Activated T-helper 2 cell treated with anti-CD3 and anti-CD28 coated beads, Interferon-gamma antibody, Interleukin-2, Interleukin-4, amounts not matched to agents 10 μg/mL and 5 μg/mL and 100 μg/mL, durations not matched to agents 14 hours and 24 hours and 36 hours (primary cell): ENCODE measurements at regions of chr3 and their contacts with region 1.

Region 1: GRCh38 chr3:133595341-133595740 is 21.9 kb downstream of the CDV3 start:
- DNase-seq: no peak
- H3K4me3 Mint-ChIP-seq: no peak overlapping the region
- H3K27ac Mint-ChIP-seq: peak overlapping the region; percentile 79
- H3K4me1 Mint-ChIP-seq: peaks cover 28% of the 10 kb centered on the region
- H3K27me3 Mint-ChIP-seq: no peaks in the 10 kb centered on the region

Region 2: DNA sequence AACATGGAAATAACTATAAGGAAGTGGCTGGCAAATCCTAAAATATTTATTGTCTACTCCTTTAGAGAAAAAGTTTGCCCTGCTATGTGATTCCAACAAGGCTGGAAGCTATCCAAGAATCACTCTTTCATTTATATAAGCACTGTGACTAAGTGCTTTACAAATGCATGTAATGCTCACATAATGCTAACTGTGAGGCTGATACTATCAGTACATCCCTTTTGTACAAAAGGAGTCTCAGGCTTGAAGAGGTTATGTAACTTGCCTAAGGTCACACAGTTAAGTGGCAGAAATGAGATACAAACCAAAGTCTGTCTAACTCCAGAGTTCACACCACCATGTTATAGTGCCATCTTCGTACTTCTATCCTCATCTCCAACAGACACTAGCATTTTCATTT is 49.4 kb after region 1 on chr3:
- intact Hi-C with region 1: loop called (anchors 5 kb)
- DNase-seq: no peak
- H3K4me3 Mint-ChIP-seq: no peak overlapping the region
- H3K27ac Mint-ChIP-seq: no peak overlapping the region
- H3K4me1 Mint-ChIP-seq: peaks cover 18% of the 10 kb centered on the region
- H3K27me3 Mint-ChIP-seq: no peaks in the 10 kb centered on the region